ENCODE measurements at regions of chr18 and their contacts with region 1.

Region 1: GRCh38 chr18:78875268-78875997 is 104.2 kb upstream of the SALL3 start:
- DNase-seq: peak; percentile 42
- H3K4me3 ChIP-seq: no peak overlapping the region
- H3K27ac ChIP-seq: no peak overlapping the region
- H3K4me1 ChIP-seq: no peaks in the 10 kb centered on the region
- H3K27me3 ChIP-seq: no peaks in the 10 kb centered on the region
- CTCF ChIP-seq: peak; percentile 35

Region 2: GRCh38 chr18:78659748-78660147 is 215.7 kb before region 1 on chr18:
- intact Hi-C with region 1: loop called (anchors 5 kb)
- DNase-seq: no peak
- H3K4me3 ChIP-seq: no peak overlapping the region
- H3K27ac ChIP-seq: no peak overlapping the region
- H3K4me1 ChIP-seq: no peaks in the 10 kb centered on the region
- H3K27me3 ChIP-seq: no peaks in the 10 kb centered on the region
- CTCF ChIP-seq: peak; percentile 41

Region 3: GRCh38 chr18:78893278-78894035 is 18.0 kb after region 1 on chr18:
- intact Hi-C with region 1: no loop called
- DNase-seq: no peak
- H3K4me3 ChIP-seq: no peak overlapping the region
- H3K27ac ChIP-seq: no peak overlapping the region
- H3K4me1 ChIP-seq: no peaks in the 10 kb centered on the region
- H3K27me3 ChIP-seq: no peaks in the 10 kb centered on the region
- CTCF ChIP-seq: no peak

Region 4: DNA sequence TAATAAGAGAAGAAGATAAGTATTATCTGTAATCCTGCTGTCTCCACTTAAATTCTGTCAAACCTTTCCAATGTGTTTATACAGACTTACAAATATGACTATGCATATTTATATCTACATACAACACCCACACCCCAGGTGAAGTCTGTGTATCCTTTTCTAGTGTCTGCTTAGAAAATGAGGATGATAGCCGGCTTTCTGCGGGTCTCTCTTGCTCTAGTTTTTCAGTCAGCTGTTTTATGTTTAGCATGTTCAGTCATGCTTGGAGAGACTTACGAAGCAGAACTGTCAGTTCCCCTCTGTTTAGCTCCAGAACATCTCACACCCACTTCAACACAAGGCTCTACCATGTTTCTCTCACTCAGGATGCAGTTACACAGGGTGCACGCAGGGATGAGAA is 383.0 kb after region 1 on chr18:
- intact Hi-C with region 1: loop called (anchors 10 kb)
- DNase-seq: no peak
- H3K4me3 ChIP-seq: no peak overlapping the region
- H3K27ac ChIP-seq: no peak overlapping the region
- H3K4me1 ChIP-seq: no peaks in the 10 kb centered on the region
- H3K27me3 ChIP-seq: no peaks in the 10 kb centered on the region
- CTCF ChIP-seq: no peak

Measured in colonic mucosa (tissue), 4 donors.